Activated CD8-positive, alpha-beta T cell treated with anti-CD3 and anti-CD28 coated beads for 36 hours (primary cell): ENCODE measurements at regions of chr11 and their contacts with region 1.

Region 1: DNA sequence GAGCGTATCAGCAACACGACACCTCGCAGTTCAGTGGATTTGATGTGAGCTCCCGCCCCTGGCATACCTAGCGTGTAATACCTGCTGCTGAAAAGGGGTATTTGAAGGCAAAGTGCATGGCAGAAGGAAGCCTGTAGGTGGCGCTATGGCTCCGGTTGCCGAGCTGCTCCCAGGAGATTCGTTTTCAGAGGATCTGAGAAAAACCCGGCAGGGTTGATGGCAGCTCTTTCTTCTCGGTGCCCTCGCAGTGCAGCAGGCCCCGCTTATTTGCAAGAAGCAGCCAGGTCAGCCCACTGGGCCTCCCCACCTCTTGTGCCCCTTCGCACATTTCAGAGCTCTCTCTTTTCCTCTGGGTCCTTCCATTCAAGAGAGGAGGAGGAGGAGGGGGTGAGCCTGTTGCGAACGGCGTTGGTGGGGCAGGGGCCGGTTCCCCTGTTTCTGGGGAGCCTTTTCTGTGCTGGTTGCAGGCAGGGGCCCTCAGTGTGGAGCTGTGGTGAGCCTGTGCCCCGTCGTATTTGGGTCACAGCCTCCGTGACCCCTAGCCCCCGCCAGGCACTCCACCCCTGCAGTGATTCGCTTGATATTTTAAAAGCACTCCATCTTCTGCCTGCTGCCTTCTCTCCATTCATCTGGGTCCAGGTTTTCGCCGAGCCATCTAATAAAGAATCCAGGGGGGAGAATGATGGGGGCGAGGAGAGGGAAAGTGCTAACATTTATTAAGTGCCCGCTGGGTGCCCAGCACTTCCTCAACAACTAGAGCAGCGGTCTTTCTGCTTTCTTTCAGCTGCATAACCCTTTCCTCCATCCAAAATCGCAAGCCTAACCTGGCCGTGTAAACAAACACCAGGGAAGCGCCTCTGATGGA is 85.3 kb upstream of the SYT13 start:
- DNase-seq: peak; percentile 79
- ATAC-seq: peak; percentile 77
- H3K4me3 Mint-ChIP-seq: no peak overlapping the region
- H3K27ac Mint-ChIP-seq: no peak overlapping the region
- H3K4me1 Mint-ChIP-seq: peaks cover 13% of the 10 kb centered on the region
- H3K27me3 Mint-ChIP-seq: peaks cover 3% of the 10 kb centered on the region
- CTCF ChIP-seq: peak; percentile 94

Region 2: GRCh38 chr11:45347348-45348082 is 24.0 kb before region 1 on chr11:
- CTCF ChIA-PET with region 1: interaction called, 12 read pairs
- POLR2A ChIA-PET with region 1: no interaction called
- intact Hi-C with region 1: no loop called
- DNase-seq: peak; percentile 16
- ATAC-seq: no peak
- H3K4me3 Mint-ChIP-seq: no peak overlapping the region
- H3K27ac Mint-ChIP-seq: no peak overlapping the region
- H3K4me1 Mint-ChIP-seq: peaks cover 9% of the 10 kb centered on the region
- H3K27me3 Mint-ChIP-seq: peaks cover 5% of the 10 kb centered on the region
- CTCF ChIP-seq: no peak

Region 3: GRCh38 chr11:45354976-45355705 is 16.3 kb before region 1 on chr11:
- CTCF ChIA-PET with region 1: interaction called, 35 read pairs
- POLR2A ChIA-PET with region 1: no interaction called
- intact Hi-C with region 1: no loop called
- DNase-seq: peak; percentile 91
- ATAC-seq: peak; percentile 96
- H3K4me3 Mint-ChIP-seq: peak overlapping the region; percentile 76
- H3K27ac Mint-ChIP-seq: peak overlapping the region; percentile 79
- H3K4me1 Mint-ChIP-seq: peaks cover 15% of the 10 kb centered on the region
- H3K27me3 Mint-ChIP-seq: no peaks in the 10 kb centered on the region
- CTCF ChIP-seq: no peak

Region 4: DNA sequence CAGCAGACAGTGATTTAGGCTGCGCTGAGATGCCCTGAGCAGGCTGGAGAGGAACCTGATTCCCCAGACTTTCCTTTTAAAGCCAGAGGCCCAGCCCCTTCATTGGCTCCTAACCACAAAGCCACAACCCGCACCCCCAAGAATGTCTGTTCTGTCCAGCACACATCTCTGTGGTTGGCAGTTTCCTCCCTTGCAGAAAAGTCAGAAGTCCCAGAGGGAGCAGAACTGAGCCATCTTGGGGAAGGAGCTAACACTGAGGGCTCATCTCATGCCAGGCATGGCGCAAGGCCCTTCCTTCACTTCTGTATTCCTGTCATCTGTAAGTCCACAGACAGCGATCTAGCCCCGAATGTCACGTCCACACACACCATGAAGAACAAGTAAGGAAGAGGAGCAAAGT is 11.7 kb after region 1 on chr11:
- CTCF ChIA-PET with region 1: interaction called, 29 read pairs
- POLR2A ChIA-PET with region 1: no interaction called
- intact Hi-C with region 1: no loop called
- DNase-seq: no peak
- ATAC-seq: no peak
- H3K4me3 Mint-ChIP-seq: no peak overlapping the region
- H3K27ac Mint-ChIP-seq: no peak overlapping the region
- H3K4me1 Mint-ChIP-seq: peaks cover 5% of the 10 kb centered on the region
- H3K27me3 Mint-ChIP-seq: no peaks in the 10 kb centered on the region
- CTCF ChIP-seq: no peak

Region 5: DNA sequence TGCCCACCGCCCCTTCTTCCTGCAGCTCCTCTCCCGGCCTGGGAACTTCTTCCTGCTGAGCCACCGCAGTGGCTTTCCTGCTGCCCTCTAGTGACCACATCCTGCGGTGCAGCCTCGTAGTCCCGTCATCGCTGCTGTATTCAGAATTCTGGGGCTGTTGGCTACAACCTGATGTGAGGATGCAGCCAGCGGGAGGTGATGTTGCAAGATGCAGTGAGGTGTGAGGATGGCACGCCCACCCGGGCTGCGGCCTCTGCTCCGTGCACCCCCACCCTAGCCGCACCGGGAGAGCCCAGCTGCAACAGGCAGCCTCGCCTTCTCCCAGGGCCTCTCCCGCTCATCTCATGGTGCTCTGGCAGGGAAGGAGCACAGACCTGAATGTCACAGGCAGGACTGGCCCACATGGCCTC is 283.9 kb after region 1 on chr11:
- CTCF ChIA-PET with region 1: interaction called, 36 read pairs
- POLR2A ChIA-PET with region 1: no interaction called
- intact Hi-C with region 1: loop called (anchors 5 kb)
- DNase-seq: peak; percentile 74
- ATAC-seq: peak; percentile 79
- H3K4me3 Mint-ChIP-seq: no peak overlapping the region
- H3K27ac Mint-ChIP-seq: no peak overlapping the region
- H3K4me1 Mint-ChIP-seq: peaks cover 3% of the 10 kb centered on the region
- H3K27me3 Mint-ChIP-seq: peaks cover 20% of the 10 kb centered on the region
- CTCF ChIP-seq: peak; percentile 93